ENCODE measurements at regions of chr9 and their contacts with region 1.

Region 1: DNA sequence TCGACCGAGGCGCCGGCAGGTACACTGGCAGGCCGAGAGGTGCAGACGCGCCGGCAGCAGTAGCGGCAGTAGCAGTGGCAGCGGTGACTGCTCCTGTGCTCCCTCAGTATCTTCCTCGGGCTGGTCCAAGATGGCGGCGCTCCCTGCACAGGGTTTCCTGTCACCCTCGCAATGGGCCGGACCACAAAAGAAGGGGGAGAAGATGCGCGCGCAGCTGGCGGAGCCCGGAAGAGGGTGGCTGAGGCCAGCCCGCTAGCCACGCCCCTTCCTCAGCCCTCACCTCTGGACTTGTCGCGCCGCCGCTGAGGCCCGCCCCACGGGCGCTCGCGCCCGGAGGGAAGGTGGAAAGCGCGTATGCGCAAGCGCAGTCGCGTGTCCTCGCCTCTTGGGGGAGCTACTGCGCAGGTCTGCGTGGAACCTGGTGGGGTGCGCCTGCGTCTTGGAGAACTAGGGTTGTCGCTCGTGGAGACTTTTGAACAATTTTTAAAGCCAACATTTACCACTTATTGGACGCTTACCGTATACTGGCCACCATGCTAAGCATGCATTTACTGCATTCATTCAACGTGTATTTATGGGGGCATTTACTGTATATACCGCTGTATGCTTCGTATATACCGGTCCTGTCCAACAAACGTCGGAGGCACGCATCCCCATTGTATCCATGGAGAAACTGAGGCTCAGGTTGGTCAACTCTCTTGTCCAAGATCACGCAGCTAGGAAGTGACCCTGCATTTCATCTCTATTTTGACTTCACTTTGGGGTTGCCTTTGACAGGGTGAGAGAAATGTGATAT is at the start of gene RAB14:
- DNase-seq: peak; percentile 100
- ATAC-seq: peak; percentile 92
- H3K4me3 Mint-ChIP-seq: peak within 1 kb of the TSS; percentile 93
- H3K27ac Mint-ChIP-seq: peak within 1 kb of the TSS; percentile 93
- H3K4me1 Mint-ChIP-seq: peaks cover 38% of the 10 kb centered on the region
- H3K27me3 Mint-ChIP-seq: no peaks in the 10 kb centered on the region
- total RNA-seq, gene RAB14: 52.3 to 54.7 TPM

Region 2: GRCh38 chr9:120579750-120580590 is 622.0 kb before region 1 on chr9 and contains the start of gene CDK5RAP2:
- CTCF ChIA-PET with region 1: no interaction called
- POLR2A ChIA-PET with region 1: no interaction called
- intact Hi-C with region 1: loop called in 1 of 2 experiments (anchors 1 kb)
- DNase-seq: peak; percentile 96
- ATAC-seq: peak; percentile 99
- H3K4me3 Mint-ChIP-seq: peak within 1 kb of the TSS; percentile 99
- H3K27ac Mint-ChIP-seq: peak within 1 kb of the TSS; percentile 94
- H3K4me1 Mint-ChIP-seq: peaks cover 40% of the 10 kb centered on the region
- H3K27me3 Mint-ChIP-seq: no peaks in the 10 kb centered on the region
- total RNA-seq, gene CDK5RAP2: 68.8 to 85.8 TPM

Region 3: GRCh38 chr9:120792898-120793765 is 408.8 kb before region 1 on chr9 and contains the start of gene FBXW2:
- CTCF ChIA-PET with region 1: no interaction called
- POLR2A ChIA-PET with region 1: interaction called, 8 read pairs
- intact Hi-C with region 1: loop called in 1 of 2 experiments (anchors 5 kb)
- DNase-seq: peak; percentile 95
- ATAC-seq: peak; percentile 92
- H3K4me3 Mint-ChIP-seq: peak within 1 kb of the TSS; percentile 93
- H3K27ac Mint-ChIP-seq: peak within 1 kb of the TSS; percentile 97
- H3K4me1 Mint-ChIP-seq: peaks cover 43% of the 10 kb centered on the region
- H3K27me3 Mint-ChIP-seq: no peaks in the 10 kb centered on the region
- total RNA-seq, gene FBXW2: 53.0 to 68.1 TPM

Region 4: GRCh38 chr9:121121582-121122087 is 80.3 kb before region 1 on chr9:
- CTCF ChIA-PET with region 1: interaction called, 3 read pairs
- POLR2A ChIA-PET with region 1: no interaction called
- intact Hi-C with region 1: loop called (anchors 1 to 5 kb)
- DNase-seq: peak; percentile 98
- ATAC-seq: peak; percentile 99
- H3K4me3 Mint-ChIP-seq: peak overlapping the region; percentile 79
- H3K27ac Mint-ChIP-seq: peak overlapping the region; percentile 90
- H3K4me1 Mint-ChIP-seq: peaks cover 51% of the 10 kb centered on the region
- H3K27me3 Mint-ChIP-seq: no peaks in the 10 kb centered on the region

Region 5: DNA sequence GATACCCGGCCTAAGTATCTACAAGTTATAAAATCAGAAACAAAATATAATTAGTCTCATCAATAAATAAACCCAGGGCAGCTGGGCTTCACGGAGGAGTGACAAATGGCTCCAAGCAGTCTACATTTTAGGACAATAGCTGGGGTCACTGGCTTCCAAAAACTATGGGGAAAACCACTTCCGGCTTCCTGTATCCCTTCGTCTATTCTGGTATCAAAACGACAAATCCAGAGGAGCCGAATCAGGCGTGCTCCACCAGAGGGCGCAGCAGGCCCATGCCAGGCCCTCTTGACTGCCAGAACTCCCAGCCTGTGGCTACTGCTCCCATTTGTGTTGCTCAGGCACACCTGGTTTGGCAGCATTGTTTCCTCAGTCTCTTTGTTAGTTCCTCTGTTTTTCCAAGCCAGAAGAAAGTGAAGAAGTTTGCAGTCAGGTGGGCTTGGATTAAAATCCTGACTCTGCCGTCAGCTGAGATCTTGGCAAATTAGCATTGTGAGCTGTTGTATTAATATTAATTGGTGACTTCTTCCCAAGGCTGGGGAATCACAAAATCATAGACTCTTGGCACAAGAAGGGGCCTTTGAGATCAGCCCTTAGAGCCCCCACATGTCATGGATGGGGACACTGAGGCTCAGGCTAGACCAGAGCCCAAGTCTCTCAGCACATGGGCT is 11.3 kb after region 1 on chr9:
- CTCF ChIA-PET with region 1: interaction called, 41 read pairs
- POLR2A ChIA-PET with region 1: no interaction called
- intact Hi-C with region 1: no loop called
- DNase-seq: peak; percentile 87
- ATAC-seq: peak; percentile 89
- H3K4me3 Mint-ChIP-seq: no peak overlapping the region
- H3K27ac Mint-ChIP-seq: no peak overlapping the region
- H3K4me1 Mint-ChIP-seq: peaks cover 7% of the 10 kb centered on the region
- H3K27me3 Mint-ChIP-seq: no peaks in the 10 kb centered on the region

Region 6: DNA sequence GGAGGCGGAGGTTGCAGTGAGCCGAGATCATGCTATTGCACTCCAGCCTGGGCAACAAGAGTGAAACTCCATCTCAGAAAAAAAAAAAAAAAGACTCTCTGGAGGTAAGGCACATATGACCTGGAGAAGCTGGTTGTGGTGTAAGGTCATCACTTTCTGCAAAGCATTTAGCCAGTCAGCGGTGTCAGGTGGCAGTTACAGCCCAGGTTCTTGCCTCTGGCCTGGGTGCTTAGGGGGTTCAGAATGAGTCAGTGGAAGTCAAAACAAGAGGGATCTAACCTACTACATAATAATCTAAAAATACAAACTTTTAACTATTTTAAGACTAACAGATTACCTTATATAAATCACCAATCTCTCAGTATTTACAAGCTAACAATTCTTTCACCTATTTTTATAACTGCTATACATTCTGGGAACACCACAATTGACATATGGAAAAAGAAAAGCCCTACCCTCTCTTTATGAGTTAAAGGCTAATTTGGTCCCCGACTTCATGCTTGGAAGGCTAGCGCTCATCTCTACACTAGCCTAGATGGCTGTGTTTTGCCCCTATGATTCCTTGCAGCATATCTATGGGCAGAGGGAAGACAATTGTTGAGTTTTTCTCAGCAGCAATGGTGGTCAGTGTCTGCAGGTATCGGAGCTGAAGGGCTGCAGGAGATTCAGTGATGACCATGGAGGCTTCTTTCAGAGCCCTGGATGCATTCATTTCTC is 138.9 kb after region 1 on chr9:
- CTCF ChIA-PET with region 1: no interaction called
- POLR2A ChIA-PET with region 1: no interaction called
- intact Hi-C with region 1: no loop called
- DNase-seq: no peak
- ATAC-seq: peak; percentile 30
- H3K4me3 Mint-ChIP-seq: no peak overlapping the region
- H3K27ac Mint-ChIP-seq: no peak overlapping the region
- H3K4me1 Mint-ChIP-seq: peaks cover 2% of the 10 kb centered on the region
- H3K27me3 Mint-ChIP-seq: no peaks in the 10 kb centered on the region